Transverse colon (tissue), 4 donors: ENCODE measurements at regions of chr1 and their contacts with region 1.

Region 1: GRCh38 chr1:194935864-194936263 is 1672.4 kb downstream of the KCNT2 start:
- DNase-seq: no peak
- H3K4me3 ChIP-seq: no peak overlapping the region
- H3K27ac ChIP-seq: no peak overlapping the region
- H3K4me1 ChIP-seq: no peaks in the 10 kb centered on the region
- H3K27me3 ChIP-seq: no peaks in the 10 kb centered on the region
- CTCF ChIP-seq: no peak
- EP300 ChIP-seq: no peak
- POLR2A ChIP-seq: no peak

Region 2: GRCh38 chr1:194394676-194395075 is 541.2 kb before region 1 on chr1:
- in situ Hi-C with region 1: no loop called
- intact Hi-C with region 1: loop called (anchors 5 kb)
- DNase-seq: no peak
- H3K4me3 ChIP-seq: no peak overlapping the region
- H3K27ac ChIP-seq: no peak overlapping the region
- H3K4me1 ChIP-seq: no peaks in the 10 kb centered on the region
- H3K27me3 ChIP-seq: no peaks in the 10 kb centered on the region
- CTCF ChIP-seq: no peak
- EP300 ChIP-seq: no peak
- POLR2A ChIP-seq: no peak

Region 3: DNA sequence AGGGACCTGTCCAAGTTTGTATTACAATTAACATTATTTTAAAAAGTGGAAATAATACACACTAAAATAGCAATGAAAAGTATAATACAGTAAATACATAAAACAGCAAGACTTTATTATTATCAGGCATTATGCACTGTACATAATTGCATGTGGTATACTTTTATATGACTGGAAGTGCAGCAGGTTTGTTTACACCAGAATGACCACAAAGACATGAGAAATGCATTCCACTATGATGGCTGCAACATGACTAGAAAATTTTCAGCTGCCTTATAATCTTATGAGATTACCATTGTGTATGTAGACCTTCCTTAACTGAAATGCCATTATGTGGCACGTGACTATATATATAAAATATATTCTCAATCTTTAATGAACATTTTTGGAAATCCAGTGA is 27.2 kb before region 1 on chr1:
- in situ Hi-C with region 1: no loop called
- intact Hi-C with region 1: no loop called
- DNase-seq: no peak
- H3K4me3 ChIP-seq: no peak overlapping the region
- H3K27ac ChIP-seq: no peak overlapping the region
- H3K4me1 ChIP-seq: no peaks in the 10 kb centered on the region
- H3K27me3 ChIP-seq: no peaks in the 10 kb centered on the region
- CTCF ChIP-seq: no peak
- EP300 ChIP-seq: no peak
- POLR2A ChIP-seq: no peak